Gastrocnemius medialis (tissue), 4 donors: ENCODE measurements at regions of chrX and their contacts with region 1.

Region 1: GRCh38 chrX:103817502-103817901 is 14.6 kb downstream of the RAB9B start:
- DNase-seq: no peak
- ATAC-seq: no peak
- H3K4me3 ChIP-seq: no peak overlapping the region
- H3K27ac ChIP-seq: no peak overlapping the region
- H3K4me1 ChIP-seq: no peaks in the 10 kb centered on the region
- H3K27me3 ChIP-seq: no peaks in the 10 kb centered on the region
- CTCF ChIP-seq: peak; percentile 31 to 80 (median 64)
- POLR2A ChIP-seq: no peak

Region 2: GRCh38 chrX:103533511-103534216 is 283.8 kb before region 1 on chrX:
- in situ Hi-C with region 1: loop called (anchors 10 to 25 kb)
- intact Hi-C with region 1: loop called (anchors 1 kb)
- DNase-seq: peak; percentile 15 to 60
- ATAC-seq: peak; percentile 68 to 77
- H3K4me3 ChIP-seq: peak overlapping the region; percentile 40 to 57 (median 48)
- H3K27ac ChIP-seq: peak overlapping the region in 1 of 4 donors; percentile 28
- H3K4me1 ChIP-seq: no peaks in the 10 kb centered on the region
- H3K27me3 ChIP-seq: no peaks in the 10 kb centered on the region
- CTCF ChIP-seq: peak; percentile 54 to 79 (median 67)
- POLR2A ChIP-seq: no peak

Region 3: DNA sequence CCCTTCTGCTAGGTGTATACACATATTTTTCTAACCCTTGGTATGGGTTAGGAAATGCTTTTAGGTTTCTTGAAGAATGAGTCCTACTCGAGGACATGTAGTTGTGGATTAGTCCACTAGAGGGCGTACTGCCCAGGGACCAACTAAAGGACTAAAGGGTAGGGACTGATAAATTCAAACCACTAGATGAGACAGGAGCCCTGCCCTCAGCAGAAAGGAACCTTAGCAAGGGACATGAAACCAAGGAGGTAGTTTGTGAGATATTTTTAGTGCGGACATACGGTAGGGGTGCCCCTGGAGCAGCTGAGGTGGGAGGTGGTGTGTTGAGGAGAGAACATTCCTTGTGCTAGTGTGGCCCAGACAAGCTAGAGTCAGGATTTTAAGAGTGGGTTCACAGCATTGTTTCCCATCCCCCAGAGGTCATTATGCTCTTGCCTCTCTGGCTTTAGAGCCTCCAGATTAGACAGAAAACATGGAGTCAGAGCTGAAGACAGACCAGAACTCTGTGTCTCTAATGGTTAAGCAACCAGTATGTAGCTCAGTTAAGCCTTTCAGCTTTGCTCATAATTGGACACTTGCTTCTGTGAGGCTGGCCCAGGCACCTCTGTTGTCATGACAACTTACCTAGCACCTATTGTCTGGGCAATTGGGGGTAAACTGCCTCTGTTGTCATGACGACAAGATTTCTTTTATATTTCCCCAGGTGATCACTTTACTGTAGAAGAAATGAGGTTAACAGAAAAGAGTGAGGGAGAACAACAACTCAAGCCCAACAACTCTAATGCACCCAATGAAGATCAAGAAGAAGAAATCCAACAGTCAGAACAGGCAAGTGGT is 105.8 kb before region 1 on chrX:
- in situ Hi-C with region 1: loop called in 1 of 4 experiments (anchors 25 kb)
- intact Hi-C with region 1: loop called (anchors 5 kb)
- DNase-seq: peak in 1 of 2 donors; percentile 12
- ATAC-seq: peak; percentile 42 to 44
- H3K4me3 ChIP-seq: no peak overlapping the region
- H3K27ac ChIP-seq: no peak overlapping the region
- H3K4me1 ChIP-seq: no peaks in the 10 kb centered on the region
- H3K27me3 ChIP-seq: no peaks in the 10 kb centered on the region
- CTCF ChIP-seq: peak; percentile 12 to 69 (median 50)
- POLR2A ChIP-seq: no peak